ENCODE measurements at regions of chr19 and their contacts with region 1.

Region 1: DNA sequence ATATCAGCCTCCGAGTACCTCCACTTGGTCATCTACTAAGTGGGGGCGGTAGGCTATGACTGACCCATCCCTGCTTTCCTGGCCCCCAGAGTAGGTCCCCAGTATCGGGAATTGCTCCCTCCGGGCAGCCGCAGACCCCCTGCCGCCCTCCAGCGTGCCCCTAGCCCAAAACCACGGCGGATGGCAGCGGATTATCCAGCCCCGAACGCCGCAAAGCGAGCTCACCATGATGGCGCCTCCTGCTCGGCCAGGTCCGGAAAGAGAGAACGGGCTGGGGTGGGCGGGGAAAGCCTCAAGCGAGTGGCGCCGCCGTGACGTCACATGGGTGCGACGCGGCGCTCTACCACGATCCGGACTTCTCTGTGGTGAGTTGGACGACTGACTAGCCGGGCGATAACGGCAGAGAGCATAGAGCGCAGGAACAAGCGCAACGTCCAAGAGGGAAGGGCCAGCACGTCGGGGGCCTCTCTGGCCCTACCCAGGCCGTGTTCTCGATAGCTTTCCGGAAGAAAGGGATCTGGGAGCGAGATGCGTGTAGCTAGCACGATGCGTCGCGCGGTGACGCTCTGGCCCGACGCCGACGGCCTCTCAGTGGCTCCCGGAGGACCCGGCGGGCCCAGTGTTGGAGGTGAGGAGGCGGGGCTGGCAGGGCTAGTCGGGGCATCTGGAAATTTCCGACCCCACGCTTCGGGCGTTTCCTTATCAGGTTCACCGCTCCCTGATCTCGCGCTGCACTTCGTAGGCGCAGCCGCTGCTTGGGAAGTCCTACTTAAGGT is at the starts of genes RPL18 and SPHK2:
- H3K4me3 ChIP-seq: peak within 1 kb of the TSS; percentile 76
- H3K27ac ChIP-seq: peak within 1 kb of the TSS; percentile 100
- H3K4me1 ChIP-seq: peaks cover 34% of the 10 kb centered on the region
- CTCF ChIP-seq: 0 out of 2 replicates have a peak, but pooled peaks have one; percentile 24

Region 2: GRCh38 chr19:48370955-48371354 is 248.1 kb before region 1 on chr19:
- CTCF ChIA-PET with region 1: no interaction called
- POLR2A ChIA-PET with region 1: no interaction called
- H3K4me3 ChIP-seq: no peak overlapping the region
- H3K27ac ChIP-seq: no peak overlapping the region
- H3K4me1 ChIP-seq: peaks cover 12% of the 10 kb centered on the region
- CTCF ChIP-seq: no peak

Region 3: DNA sequence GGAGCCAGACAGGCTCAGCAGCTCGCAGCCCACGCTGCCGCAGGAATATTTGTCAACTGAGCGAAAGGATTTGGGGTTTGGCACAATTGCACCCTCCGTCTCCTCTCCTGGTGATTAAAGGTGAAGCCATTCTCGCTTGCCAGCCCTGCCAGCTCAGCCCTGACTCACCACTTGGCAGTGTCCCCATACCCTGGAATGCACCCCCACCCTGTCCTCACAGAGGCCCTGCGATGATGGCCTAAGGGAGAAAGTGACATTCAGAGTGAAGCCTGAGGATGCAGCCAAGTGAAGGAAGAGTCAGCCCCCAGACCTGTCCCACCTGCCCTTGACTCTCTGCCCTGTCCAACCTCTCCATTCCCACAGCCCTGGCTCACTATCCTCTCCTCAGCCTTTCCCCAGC is 131.1 kb before region 1 on chr19:
- CTCF ChIA-PET with region 1: interaction called, 3 read pairs
- POLR2A ChIA-PET with region 1: interaction called, 13 read pairs
- H3K4me3 ChIP-seq: no peak overlapping the region
- H3K27ac ChIP-seq: no peak overlapping the region
- H3K4me1 ChIP-seq: peaks cover 6% of the 10 kb centered on the region
- CTCF ChIP-seq: no peak

Region 4: DNA sequence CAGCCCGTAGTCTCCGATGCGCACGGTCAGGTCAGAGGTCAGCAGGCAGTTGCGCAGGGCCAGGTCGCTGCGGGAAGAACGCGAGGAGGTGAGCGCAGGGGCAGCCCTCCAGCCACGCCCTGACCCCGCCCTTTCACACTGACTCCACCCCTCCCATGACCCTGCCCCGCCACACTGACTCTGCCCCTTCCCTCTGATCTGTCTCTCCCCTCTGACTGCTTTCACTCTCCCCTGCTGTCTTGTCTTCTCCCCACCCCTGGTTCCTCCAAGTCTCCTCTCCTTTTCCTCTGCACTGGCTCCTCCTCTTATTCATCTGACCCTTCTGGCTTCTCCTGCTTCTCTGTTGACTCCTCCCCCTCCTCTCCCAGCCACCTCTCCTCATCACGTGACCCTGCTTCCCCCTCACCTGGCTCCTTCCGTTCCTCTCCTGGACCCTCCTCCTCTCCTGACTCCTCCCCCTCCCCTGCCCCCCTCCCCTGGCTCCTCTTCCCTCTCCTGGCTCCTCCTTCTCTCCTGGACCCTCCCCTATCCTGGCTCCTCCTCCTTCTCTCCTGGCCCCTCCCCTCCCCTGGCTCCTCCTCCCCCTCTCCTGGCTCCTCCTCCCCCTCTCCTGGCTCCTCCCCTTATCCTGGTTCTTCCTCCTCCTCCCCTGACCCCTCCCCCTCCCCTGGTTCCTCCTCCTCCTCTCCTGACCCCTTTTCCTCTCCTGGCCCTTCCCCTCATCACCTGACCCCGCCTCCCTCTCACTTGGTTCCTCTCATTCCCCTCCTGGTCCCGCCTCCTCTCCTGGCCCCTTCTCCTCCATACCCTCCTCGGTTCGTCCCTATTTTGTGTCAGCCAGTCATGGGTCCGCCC is 117.4 kb before region 1 on chr19:
- CTCF ChIA-PET with region 1: no interaction called
- POLR2A ChIA-PET with region 1: interaction called, 12 read pairs
- H3K4me3 ChIP-seq: peak overlapping the region; percentile 21
- H3K27ac ChIP-seq: no peak overlapping the region; the same call in 1 of the 2 replicates
- H3K4me1 ChIP-seq: peaks cover 3% of the 10 kb centered on the region; the same call in 1 of the 2 replicates
- CTCF ChIP-seq: no peak

Region 5: DNA sequence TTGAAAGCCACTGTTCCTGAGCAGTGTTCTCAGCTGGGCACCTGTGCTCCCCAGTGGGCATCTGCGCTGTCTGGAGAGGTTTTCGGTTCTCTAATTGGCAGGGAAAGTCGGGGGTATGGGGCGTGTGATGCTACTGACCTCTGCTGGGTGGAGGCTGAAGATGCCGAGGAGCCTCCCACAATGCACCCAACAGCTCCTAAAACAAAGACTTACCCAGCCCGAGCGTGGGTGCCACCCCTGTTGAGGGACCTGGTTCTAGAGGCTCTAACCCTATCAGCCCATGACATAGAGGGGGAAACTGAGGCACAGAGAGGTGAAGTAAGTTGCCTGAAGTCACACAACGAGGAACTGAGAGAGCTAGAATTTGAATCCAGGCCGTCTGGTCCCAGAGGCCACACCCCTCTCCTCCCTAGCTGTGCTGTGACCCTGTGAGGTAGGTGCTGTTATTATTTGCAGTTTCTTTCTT is 10.3 kb before region 1 on chr19:
- CTCF ChIA-PET with region 1: interaction called, 3 read pairs
- POLR2A ChIA-PET with region 1: interaction called, 60 read pairs
- H3K4me3 ChIP-seq: no peak overlapping the region
- H3K27ac ChIP-seq: no peak overlapping the region
- H3K4me1 ChIP-seq: no peaks in the 10 kb centered on the region; the same call in 1 of the 2 replicates
- CTCF ChIP-seq: peak; percentile 86

Region 6: GRCh38 chr19:48637170-48637947 is 18.3 kb after region 1 on chr19 and contains the start of gene DBP:
- CTCF ChIA-PET with region 1: interaction called, 3 read pairs
- POLR2A ChIA-PET with region 1: interaction called, 97 read pairs
- H3K4me3 ChIP-seq: peak within 1 kb of the TSS; percentile 42
- H3K27ac ChIP-seq: peak within 1 kb of the TSS; percentile 85
- H3K4me1 ChIP-seq: peaks cover 23% of the 10 kb centered on the region
- CTCF ChIP-seq: no peak; the same call in 1 of the 2 replicates

Region 7: DNA sequence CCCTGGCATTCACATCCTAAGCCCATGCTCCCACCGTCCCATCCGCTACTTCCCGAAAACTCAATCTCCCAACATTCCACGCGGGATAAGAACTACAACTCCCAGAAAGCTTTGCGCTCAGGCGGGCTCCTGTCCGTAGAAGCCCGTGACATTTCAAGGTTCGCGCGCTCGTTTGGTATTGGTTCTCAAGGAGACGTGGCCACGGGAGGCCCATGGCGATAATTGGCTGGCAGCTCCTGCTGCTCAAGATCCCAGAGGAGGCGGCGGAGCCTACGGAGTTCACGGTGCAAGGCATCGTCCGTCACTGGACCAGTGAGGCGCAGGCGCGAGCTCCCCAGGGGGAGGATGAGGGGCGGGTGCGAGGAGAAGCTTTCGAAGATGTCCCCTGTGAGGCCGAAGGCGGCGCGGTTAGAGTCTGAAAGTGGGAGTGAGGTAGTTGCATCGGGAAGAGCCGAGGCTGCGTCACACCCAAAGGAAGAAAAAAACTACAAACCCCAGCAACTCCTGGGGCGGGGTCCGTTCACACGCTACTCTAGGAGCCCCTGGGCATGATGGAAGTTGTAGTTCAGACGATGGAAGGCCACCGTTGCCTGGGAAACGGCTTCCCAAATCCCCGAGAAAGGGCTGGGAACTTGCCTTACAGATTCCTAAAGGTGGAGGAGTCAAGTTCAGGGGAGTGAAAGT is 101.7 kb after region 1 on chr19:
- CTCF ChIA-PET with region 1: no interaction called
- POLR2A ChIA-PET with region 1: interaction called, 13 read pairs
- H3K4me3 ChIP-seq: peak overlapping the region; percentile 74
- H3K27ac ChIP-seq: peak overlapping the region; percentile 75
- H3K4me1 ChIP-seq: no peaks in the 10 kb centered on the region; the same call in 1 of the 2 replicates
- CTCF ChIP-seq: no peak

Region 8: DNA sequence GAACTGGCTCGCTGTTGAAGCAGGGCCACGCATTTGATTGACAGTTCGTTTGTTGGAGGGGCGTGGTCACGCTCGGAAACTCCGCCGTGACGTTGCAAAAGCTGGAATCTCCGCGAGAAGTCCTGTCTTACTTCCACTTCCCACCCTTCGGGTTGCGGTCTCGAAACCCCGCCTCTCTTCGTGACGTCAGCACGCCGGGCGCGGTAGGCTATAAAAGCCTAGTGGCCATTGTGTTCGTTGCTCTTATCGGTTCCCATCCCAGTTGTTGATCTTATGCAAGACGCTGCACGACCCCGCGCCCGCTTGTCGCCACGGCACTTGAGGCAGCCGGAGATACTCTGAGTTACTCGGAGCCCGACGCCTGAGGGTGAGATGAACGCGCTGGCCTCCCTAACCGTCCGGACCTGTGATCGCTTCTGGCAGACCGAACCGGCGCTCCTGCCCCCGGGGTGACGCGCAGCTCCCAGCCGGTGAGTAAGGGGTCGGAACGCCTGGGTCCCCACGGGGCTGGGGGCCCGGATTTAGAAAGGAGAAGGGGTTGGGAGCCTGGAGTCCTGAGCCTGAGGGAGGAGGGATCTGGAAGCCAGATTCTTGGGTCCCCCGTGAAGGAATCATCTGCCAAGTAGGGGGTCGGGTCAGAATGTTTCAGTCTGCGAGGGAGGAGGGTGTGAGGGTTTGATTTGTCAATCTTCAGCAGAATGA is 253.2 kb after region 1 on chr19 and contains the start of gene PPP1R15A:
- CTCF ChIA-PET with region 1: no interaction called
- POLR2A ChIA-PET with region 1: interaction called, 10 read pairs
- H3K4me3 ChIP-seq: peak within 1 kb of the TSS; percentile 80
- H3K27ac ChIP-seq: peak within 1 kb of the TSS; percentile 93
- H3K4me1 ChIP-seq: peaks cover 32% of the 10 kb centered on the region
- CTCF ChIP-seq: 0 out of 2 replicates have a peak, but pooled peaks have one; percentile 32

Measured in HEK293 (cell line).